ENCODE measurements at regions of chr1 and their contacts with region 1.

Region 1: GRCh38 chr1:216983823-216984222 is 260.6 kb upstream of the ESRRG start:
- DNase-seq: no peak
- ATAC-seq: peak in 1 of 2 donors; percentile 49
- H3K4me3 ChIP-seq: no peak overlapping the region
- H3K27ac ChIP-seq: no peak overlapping the region
- H3K4me1 ChIP-seq: peaks cover 0 to 6% of the 10 kb centered on the region in 2 donors
- H3K27me3 ChIP-seq: no peaks in the 10 kb centered on the region
- CTCF ChIP-seq: no peak
- POLR2A ChIP-seq: no peak

Region 2: GRCh38 chr1:215888159-215888558 is 1095.7 kb before region 1 on chr1:
- in situ Hi-C with region 1: no loop called
- intact Hi-C with region 1: loop called (anchors 10 kb)
- DNase-seq: no peak
- ATAC-seq: no peak
- H3K4me3 ChIP-seq: no peak overlapping the region
- H3K27ac ChIP-seq: no peak overlapping the region
- H3K4me1 ChIP-seq: no peaks in the 10 kb centered on the region
- H3K27me3 ChIP-seq: no peaks in the 10 kb centered on the region
- CTCF ChIP-seq: no peak
- POLR2A ChIP-seq: no peak

Region 3: DNA sequence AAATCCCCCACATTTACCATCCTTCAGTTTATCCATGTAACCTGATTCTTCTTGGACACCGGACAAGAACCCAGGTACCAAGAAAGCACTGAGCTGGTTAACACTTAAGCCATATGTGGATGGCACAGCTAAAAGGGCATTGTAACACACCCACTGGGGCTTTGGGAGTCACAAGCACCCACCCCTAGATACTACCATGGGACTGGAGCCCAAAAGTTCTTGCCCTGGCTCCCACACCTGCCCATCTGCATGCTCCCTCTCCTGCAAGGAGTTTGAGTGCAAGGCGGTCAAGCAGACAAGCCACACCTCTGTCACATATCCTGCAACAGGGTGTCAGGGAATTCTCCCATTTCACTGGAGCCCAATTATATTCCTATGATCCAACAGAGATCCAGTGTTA is 830.7 kb before region 1 on chr1:
- in situ Hi-C with region 1: no loop called
- intact Hi-C with region 1: no loop called
- DNase-seq: no peak
- ATAC-seq: no peak
- H3K4me3 ChIP-seq: no peak overlapping the region
- H3K27ac ChIP-seq: no peak overlapping the region
- H3K4me1 ChIP-seq: no peaks in the 10 kb centered on the region
- H3K27me3 ChIP-seq: no peaks in the 10 kb centered on the region
- CTCF ChIP-seq: no peak
- POLR2A ChIP-seq: no peak

Measured in gastrocnemius medialis (tissue), 4 donors.